Right cardiac atrium (tissue), 5 donors: ENCODE measurements at regions of chr9 and their contacts with region 1.

Region 1: GRCh38 chr9:76044266-76044819 is 153.9 kb downstream of the PCSK5 start:
- DNase-seq: no peak
- ATAC-seq: no peak
- H3K4me3 ChIP-seq: no peak overlapping the region
- H3K27ac ChIP-seq: no peak overlapping the region
- H3K4me1 ChIP-seq: no peaks in the 10 kb centered on the region
- H3K27me3 ChIP-seq: no peaks in the 10 kb centered on the region

Region 2: DNA sequence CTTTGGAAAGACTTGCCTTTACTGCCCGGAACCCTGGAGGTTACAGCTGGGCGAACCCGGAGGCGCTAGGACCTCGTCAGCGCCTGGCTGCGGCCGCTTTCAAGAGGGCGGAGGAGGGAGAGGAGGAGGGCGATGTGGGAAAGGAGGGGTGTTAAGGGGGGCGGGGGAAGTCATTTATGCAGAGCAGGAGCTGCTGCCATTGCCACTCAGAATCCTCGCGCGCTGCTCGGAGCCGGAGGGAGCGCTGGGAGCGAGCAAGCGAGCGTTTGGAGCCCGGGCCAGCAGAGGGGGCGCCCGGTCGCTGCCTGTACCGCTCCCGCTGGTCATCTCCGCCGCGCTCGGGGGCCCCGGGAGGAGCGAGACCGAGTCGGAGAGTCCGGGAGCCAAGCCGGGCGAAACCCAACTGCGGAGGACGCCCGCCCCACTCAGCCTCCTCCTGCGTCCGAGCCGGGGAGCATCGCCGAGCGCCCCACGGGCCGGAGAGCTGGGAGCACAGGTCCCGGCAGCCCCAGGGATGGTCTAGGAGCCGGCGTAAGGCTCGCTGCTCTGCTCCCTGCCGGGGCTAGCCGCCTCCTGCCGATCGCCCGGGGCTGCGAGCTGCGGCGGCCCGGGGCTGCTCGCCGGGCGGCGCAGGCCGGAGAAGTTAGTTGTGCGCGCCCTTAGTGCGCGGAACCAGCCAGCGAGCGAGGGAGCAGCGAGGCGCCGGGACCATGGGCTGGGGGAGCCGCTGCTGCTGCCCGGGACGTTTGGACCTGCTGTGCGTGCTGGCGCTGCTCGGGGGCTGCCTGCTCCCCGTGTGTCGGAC is 153.7 kb before region 1 on chr9 and contains the start of gene PCSK5:
- intact Hi-C with region 1: loop called in 1 of 4 experiments (anchors 10 kb)
- DNase-seq: peak; percentile 92 to 96 (median 96)
- ATAC-seq: peak; percentile 98
- H3K4me3 ChIP-seq: peak within 1 kb of the TSS; percentile 77
- H3K27ac ChIP-seq: peak within 1 kb of the TSS; percentile 63
- H3K4me1 ChIP-seq: peaks cover 2% of the 10 kb centered on the region
- H3K27me3 ChIP-seq: no peaks in the 10 kb centered on the region
- total RNA-seq, gene PCSK5: 4.9 to 7.6 (median 5.8) TPM

Region 3: DNA sequence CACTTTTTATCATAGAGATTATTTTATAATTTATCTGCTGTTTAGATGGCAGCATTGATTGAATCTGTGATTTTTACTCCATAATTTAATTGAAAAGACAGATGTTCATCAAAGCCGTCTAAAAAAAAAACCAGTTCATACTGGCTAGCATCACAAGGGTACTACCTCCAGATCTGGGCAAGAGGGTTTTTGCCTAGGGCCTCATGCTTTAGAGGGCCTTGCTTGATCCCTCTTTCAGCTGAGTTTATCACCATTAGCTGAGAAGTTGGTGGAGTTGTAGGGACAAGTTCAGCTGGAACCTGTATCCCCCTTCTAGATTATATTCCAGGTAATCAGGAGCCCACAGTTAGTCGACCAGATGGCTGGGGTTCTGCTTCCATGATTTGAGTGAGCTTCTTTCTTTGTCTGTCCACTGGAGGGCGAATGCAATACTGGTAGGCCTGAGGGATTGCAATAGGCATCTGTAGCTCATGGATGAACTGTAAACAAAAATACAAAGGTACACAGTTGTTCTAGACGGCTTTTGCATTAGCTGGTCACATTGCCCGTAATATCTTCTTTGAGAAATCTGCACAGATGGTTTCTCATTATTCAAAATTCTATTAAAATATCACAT is 65.1 kb before region 1 on chr9:
- intact Hi-C with region 1: no loop called
- DNase-seq: no peak
- ATAC-seq: no peak
- H3K4me3 ChIP-seq: no peak overlapping the region
- H3K27ac ChIP-seq: no peak overlapping the region
- H3K4me1 ChIP-seq: no peaks in the 10 kb centered on the region
- H3K27me3 ChIP-seq: no peaks in the 10 kb centered on the region

Region 4: DNA sequence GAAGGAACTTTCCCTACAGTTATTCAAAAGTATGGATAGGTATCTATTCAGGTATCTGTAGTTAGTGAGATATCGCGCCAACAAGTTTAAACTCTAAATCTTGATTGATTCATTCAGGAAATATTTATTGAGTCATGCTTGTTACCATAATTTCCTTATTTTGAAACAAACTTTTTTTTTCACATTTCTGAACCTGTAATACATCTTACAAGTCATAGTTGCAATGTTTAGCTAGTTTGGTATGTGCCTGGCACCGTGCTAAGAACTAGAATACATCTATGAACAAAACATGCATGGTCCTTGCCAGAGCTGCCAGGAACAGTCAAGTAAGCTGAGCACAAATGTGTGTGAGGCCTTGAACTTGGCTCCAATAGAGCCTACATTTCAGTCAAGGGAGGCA is 72.6 kb after region 1 on chr9:
- intact Hi-C with region 1: loop called in 1 of 4 experiments (anchors 2 kb)
- DNase-seq: peak in 2 of 3 donors; percentile 31 to 52
- ATAC-seq: peak in 1 of 2 donors; percentile 67
- H3K4me3 ChIP-seq: no peak overlapping the region
- H3K27ac ChIP-seq: no peak overlapping the region
- H3K4me1 ChIP-seq: no peaks in the 10 kb centered on the region
- H3K27me3 ChIP-seq: no peaks in the 10 kb centered on the region

Region 5: GRCh38 chr9:76374702-76375559 is 330.6 kb after region 1 on chr9:
- intact Hi-C with region 1: no loop called
- DNase-seq: peak; percentile 84 to 87 (median 85)
- ATAC-seq: peak; percentile 86 to 97
- H3K4me3 ChIP-seq: no peak overlapping the region
- H3K27ac ChIP-seq: no peak overlapping the region
- H3K4me1 ChIP-seq: peaks cover 2% of the 10 kb centered on the region
- H3K27me3 ChIP-seq: no peaks in the 10 kb centered on the region